Cardiac septum (tissue), 1 donor: ENCODE measurements at regions of chr3 and their contacts with region 1.

Region 1: GRCh38 chr3:58013973-58014649 is 5.9 kb downstream of the FLNB start:
- DNase-seq: no peak

Region 2: DNA sequence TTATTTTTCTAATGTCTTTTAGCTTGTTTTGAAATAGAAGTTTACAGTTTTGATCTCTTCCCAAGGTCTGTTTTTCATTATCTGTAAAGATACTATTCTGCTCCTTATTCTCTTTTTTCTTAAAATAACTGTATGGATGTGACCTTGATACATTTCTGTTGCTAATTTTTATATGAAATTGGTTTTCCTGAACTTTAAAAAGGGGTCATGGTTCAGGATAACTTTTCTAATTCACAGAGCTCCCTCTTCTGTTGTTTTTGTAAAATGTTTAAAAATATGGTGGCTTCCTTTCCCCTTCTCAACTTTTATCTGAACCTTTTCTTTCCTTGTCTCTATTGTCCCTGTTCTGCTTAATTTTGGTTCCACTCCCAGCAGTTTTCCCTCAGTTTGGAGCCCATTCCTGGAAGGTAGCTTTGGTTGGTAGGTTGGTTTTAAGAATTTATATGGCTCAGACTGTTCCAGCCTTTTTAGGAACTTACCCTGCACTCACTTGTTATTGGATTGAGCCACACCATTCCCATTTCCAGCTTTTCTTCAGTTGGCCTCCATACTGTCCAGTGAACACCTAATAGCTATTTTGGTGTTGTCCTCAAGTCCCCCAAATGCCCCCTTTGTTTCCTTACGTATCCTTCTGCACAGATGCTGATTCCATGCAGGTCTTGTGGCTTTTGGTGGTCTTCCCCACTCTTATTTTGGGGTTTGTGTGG is 187.7 kb before region 1 on chr3:
- intact Hi-C with region 1: no loop called
- DNase-seq: no peak

Region 3: GRCh38 chr3:57992452-57993213 is 21.5 kb before region 1 on chr3:
- intact Hi-C with region 1: no loop called
- DNase-seq: no peak

Region 4: DNA sequence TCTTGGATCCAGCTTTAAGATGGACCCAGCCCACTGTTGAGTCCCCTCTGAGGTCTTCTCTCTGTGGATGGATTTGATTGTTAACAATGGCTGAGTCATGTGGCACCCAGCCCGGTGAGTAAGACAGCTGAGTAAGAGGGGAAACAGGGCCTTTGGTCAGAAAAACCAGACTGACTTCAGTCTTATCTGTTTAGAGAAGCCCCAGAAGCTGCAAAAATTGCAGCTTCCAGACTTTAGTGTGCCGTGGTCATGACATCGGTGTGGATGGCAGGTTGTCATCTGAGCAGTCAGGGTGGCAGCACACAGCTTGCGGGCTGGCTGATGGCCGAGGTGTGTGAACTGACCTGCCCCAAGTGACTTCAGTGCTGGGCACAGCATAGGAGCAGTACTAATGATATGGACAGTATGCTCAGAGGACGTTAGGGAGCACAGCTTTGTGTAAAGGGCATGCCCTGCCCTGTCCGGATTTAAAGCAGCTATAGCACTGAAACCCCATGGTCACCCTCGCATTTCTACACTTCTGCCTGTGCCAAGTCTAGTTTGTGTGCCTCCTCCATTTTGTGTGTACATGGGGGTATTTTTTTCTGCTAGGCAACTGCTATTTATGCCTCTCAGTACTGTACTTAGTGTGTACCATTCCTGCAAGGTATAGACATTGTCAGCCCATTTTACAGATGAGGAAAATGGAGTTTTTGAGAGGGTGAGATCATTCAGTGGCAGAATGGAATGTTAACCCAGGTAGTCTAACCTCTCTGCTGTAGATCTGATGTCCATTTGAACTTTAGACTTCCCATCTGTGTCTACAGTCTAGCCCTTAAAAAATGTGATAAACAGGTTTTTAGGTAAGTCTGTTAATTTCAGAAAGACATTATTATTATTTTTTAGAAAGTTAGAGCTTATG is 38.5 kb after region 1 on chr3:
- intact Hi-C with region 1: loop called (anchors 5 kb)
- DNase-seq: peak; percentile 90

Region 5: DNA sequence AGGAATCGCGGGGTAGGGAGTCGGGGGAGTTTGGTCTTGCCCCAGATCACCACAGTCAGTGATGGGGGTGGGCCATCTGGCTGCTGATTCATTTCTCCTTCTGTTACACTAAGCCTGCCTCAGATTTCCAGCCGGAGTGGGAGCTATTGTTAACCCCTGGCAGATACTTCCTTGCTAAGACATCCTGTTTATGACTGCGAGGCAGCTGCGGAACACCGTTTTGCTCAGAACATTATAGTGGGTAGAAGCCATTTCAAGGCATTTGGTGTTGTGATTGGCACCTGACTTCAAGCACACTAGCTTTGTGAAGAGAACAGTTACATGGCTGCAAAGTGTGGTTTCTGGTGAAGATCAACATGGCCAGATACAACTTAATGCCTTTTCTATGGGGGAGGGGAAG is 67.9 kb after region 1 on chr3:
- intact Hi-C with region 1: loop called (anchors 5 kb)
- DNase-seq: no peak